ENCODE measurements at regions of chr17 and their contacts with region 1.

Region 1: DNA sequence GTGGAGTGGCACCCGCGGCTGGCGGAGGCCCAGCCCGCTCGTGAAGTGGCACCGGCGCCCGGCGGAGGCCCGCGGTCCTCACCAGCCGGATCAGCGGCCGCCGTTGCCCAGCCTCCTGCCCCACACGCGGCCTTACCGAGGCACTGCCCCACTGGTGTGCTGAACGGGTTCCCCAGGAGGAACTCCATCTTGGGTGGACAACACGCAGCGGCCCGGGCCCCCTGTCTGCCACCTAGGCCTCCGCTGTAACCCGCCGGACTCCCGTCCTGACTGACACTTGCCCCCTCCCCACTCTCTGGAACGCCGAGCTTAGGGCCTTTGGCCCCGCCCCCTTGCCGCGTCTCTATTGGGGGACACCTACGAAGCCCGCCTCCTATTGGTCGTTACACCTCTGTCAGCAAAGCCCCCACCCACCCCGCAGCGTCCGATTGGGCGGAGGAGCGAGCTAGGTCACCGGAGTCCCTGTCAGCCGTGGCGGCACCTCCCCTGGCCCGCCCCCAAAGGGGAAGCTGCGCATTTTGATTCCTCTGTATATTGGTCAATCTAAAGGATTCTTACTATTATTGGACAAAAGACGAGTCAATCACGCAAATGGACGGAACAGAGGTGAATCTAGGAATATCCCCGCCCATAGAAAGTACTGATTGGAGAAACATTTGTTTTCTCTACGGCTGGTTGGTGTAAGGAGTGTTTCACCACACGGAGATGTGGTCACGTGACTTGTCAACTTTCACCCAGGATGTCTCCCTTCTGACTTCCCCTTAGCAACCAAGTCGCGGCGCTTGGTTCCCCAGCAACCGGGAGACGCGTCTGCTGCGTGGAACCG is at the starts of genes DRC3 and TOM1L2:
- DNase-seq: peak; percentile 100
- ATAC-seq: peak; percentile 95
- H3K4me3 Mint-ChIP-seq: peak within 1 kb of the TSS; percentile 92
- H3K27ac Mint-ChIP-seq: peak within 1 kb of the TSS; percentile 89
- H3K4me1 Mint-ChIP-seq: peaks cover 29% of the 10 kb centered on the region
- H3K27me3 Mint-ChIP-seq: no peaks in the 10 kb centered on the region
- CTCF ChIP-seq: no peak
- total RNA-seq, gene DRC3: 0.25 TPM in 1 of 2 experiments, not detected in the other
- total RNA-seq, gene TOM1L2: 10.3 to 10.8 TPM

Region 2: GRCh38 chr17:17959520-17960361 is 12.6 kb before region 1 on chr17:
- CTCF ChIA-PET with region 1: interaction called, 3 read pairs
- POLR2A ChIA-PET with region 1: interaction called, 35 read pairs
- intact Hi-C with region 1: no loop called
- DNase-seq: peak; percentile 57
- ATAC-seq: peak; percentile 53
- H3K4me3 Mint-ChIP-seq: peak overlapping the region; percentile 72
- H3K27ac Mint-ChIP-seq: peak overlapping the region; percentile 95
- H3K4me1 Mint-ChIP-seq: peaks cover 52% of the 10 kb centered on the region
- H3K27me3 Mint-ChIP-seq: no peaks in the 10 kb centered on the region
- CTCF ChIP-seq: no peak

Measured in activated CD8-positive, alpha-beta T cell treated with anti-CD3 and anti-CD28 coated beads for 36 hours (primary cell).